ENCODE measurements at regions of chr19 and their contacts with region 1.

Region 1: DNA sequence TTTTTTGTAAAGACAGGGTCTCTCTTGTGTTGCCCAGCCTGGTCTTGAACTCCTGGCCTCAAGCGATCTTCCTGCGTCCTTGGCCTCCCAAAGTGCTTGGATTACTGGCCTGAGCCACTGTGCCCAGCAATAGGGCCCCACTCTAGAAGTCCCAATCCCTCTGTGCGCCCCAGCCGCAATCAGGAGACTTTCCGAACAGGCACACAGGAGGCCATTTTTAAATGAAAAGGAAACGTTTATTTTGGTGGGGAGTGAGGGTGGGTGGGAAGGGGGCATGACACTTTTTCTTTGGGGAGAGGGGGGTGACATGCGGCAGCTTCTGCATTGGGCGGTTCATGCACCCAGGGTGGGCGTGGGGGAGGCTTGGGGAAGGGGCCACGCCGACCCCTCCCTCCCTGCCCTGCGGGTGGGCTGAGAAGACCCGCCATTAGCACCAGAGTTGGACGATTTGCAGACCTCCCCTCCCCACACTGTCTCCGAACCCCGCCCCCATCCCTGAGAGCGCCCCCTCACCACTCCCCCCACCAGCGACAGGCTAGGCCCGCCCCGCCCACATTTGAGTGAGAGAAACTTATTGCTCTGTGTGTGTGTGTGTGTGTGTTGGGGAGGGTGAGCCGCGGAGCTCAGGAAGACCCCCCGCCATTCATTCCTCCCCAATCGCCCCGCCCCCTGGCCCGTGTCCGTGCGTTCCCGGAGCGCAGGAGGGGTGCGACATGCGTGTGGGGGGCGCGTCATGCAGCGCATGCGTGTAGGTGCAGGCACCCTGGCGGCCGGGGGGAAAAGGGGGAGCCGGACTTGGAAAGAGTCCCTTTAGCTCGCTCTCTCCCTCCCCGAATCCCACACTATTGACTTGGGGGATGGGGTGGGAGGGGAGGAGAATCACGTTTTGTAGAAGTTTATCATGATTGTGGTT is 17.2 kb downstream of the KCNC3 start:
- H3K4me3 ChIP-seq: peak overlapping the region; percentile 20
- H3K27ac ChIP-seq: no peak overlapping the region
- H3K4me1 ChIP-seq: peaks cover 9% of the 10 kb centered on the region
- CTCF ChIP-seq: peak; percentile 51; the same call in 1 of the 2 replicates

Region 2: GRCh38 chr19:50273821-50274220 is 38.2 kb before region 1 on chr19:
- CTCF ChIA-PET with region 1: interaction called, 10 read pairs
- POLR2A ChIA-PET with region 1: no interaction called
- H3K4me3 ChIP-seq: no peak overlapping the region
- H3K27ac ChIP-seq: no peak overlapping the region
- H3K4me1 ChIP-seq: no peaks in the 10 kb centered on the region
- CTCF ChIP-seq: no peak

Region 3: GRCh38 chr19:50344661-50345318 is 32.8 kb after region 1 on chr19:
- CTCF ChIA-PET with region 1: no interaction called
- POLR2A ChIA-PET with region 1: no interaction called
- H3K4me3 ChIP-seq: no peak overlapping the region
- H3K27ac ChIP-seq: no peak overlapping the region
- H3K4me1 ChIP-seq: no peaks in the 10 kb centered on the region
- CTCF ChIP-seq: no peak

Region 4: GRCh38 chr19:50476224-50476942 is 164.4 kb after region 1 on chr19 and contains the starts of genes EMC10 and GARIN5A:
- CTCF ChIA-PET with region 1: no interaction called
- POLR2A ChIA-PET with region 1: no interaction called
- H3K4me3 ChIP-seq: peak within 1 kb of the TSS; percentile 96
- H3K27ac ChIP-seq: peak within 1 kb of the TSS; percentile 98
- H3K4me1 ChIP-seq: peaks cover 7% of the 10 kb centered on the region; the same call in 1 of the 2 replicates
- CTCF ChIP-seq: no peak